ENCODE measurements at regions of chrX and their contacts with region 1.

Region 1: GRCh38 chrX:129606918-129607317 is 47.8 kb downstream of the APLN start:
- DNase-seq: peak; percentile 74
- H3K4me3 ChIP-seq: no peak overlapping the region
- H3K27ac ChIP-seq: no peak overlapping the region
- H3K4me1 ChIP-seq: peaks cover 0 to 11% (median 2%) of the 10 kb centered on the region in 4 donors
- H3K27me3 ChIP-seq: no peaks in the 10 kb centered on the region
- CTCF ChIP-seq: peak; percentile 66 to 90 (median 75)
- EP300 ChIP-seq: no peak
- POLR2A ChIP-seq: no peak

Region 2: DNA sequence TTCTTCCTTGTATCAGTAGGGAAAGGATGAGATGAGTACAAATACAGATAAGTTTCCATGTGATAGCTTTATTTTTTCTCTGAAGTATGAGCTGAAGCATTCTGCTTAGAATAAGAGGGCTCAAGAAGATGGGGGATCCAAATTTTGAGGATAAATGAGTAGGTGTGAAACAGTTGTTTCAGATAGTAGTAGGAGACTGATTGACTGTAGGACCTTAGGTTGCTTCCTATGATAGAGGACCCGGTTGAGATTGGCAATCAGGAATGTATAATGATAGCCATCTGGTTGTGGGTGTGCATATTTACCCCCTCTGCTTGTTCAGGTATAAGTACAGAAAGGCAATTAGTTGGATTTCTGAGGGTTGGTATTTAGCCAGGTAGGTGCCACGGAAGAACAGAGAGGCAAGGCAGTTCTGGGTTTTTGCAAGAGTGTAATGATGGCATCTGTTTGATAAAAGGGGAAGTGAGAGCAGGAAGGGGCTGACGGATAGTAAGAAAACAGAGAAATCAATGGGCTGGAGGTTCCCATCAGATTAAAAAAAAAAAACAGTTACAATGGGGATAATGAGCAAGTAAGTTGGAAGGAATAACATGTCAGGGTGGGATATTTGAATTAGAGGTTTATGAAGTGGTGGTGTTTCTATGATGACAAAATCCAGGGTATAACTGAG is 53.2 kb before region 1 on chrX:
- in situ Hi-C with region 1: no loop called
- intact Hi-C with region 1: no loop called
- DNase-seq: no peak
- H3K4me3 ChIP-seq: no peak overlapping the region
- H3K27ac ChIP-seq: no peak overlapping the region
- H3K4me1 ChIP-seq: no peaks in the 10 kb centered on the region
- H3K27me3 ChIP-seq: no peaks in the 10 kb centered on the region
- CTCF ChIP-seq: no peak
- EP300 ChIP-seq: no peak
- POLR2A ChIP-seq: no peak

Region 3: DNA sequence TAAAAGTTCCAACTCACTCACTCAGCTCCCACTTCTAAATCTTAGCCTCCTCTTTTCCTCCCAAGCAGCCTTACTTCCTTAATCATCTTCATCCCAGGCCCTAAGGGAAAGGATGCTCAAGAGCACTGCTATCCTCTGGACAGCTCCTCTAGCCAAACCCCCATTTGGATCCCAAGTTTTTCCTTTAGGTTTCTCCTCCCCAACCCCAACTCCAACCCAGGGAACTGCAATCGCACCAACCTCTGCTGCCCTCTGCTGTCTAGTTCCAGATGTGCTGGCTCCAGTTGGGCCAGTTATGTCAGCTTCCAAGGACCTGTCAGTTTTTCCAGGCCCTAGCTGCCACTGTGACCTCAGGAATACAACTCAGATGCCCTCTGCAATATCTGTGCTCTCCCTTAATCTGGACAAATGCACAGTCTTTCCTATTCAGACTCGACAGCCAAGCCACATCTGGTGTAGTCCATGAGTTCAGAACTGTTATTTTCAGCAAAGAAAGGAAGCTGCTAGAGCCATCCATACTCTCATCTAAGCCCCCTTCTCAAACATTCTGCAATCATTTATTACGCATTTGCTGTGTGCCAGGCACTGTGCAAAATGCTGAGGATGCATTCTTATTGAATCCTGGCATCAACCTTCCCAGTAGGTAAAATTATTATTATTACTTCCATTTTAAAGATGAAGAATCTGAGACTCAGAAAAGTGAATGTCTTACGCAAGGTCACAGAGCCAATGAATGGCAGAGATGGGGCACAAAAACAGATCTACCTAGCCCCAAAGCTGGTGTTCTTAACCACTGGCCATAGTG is 119.6 kb after region 1 on chrX:
- in situ Hi-C with region 1: loop called in 1 of 4 experiments (anchors 10 kb)
- intact Hi-C with region 1: no loop called
- DNase-seq: peak; percentile 62
- H3K4me3 ChIP-seq: no peak overlapping the region
- H3K27ac ChIP-seq: no peak overlapping the region
- H3K4me1 ChIP-seq: no peaks in the 10 kb centered on the region
- H3K27me3 ChIP-seq: no peaks in the 10 kb centered on the region
- CTCF ChIP-seq: peak; percentile 56 to 74 (median 59)
- EP300 ChIP-seq: no peak
- POLR2A ChIP-seq: no peak

Region 4: DNA sequence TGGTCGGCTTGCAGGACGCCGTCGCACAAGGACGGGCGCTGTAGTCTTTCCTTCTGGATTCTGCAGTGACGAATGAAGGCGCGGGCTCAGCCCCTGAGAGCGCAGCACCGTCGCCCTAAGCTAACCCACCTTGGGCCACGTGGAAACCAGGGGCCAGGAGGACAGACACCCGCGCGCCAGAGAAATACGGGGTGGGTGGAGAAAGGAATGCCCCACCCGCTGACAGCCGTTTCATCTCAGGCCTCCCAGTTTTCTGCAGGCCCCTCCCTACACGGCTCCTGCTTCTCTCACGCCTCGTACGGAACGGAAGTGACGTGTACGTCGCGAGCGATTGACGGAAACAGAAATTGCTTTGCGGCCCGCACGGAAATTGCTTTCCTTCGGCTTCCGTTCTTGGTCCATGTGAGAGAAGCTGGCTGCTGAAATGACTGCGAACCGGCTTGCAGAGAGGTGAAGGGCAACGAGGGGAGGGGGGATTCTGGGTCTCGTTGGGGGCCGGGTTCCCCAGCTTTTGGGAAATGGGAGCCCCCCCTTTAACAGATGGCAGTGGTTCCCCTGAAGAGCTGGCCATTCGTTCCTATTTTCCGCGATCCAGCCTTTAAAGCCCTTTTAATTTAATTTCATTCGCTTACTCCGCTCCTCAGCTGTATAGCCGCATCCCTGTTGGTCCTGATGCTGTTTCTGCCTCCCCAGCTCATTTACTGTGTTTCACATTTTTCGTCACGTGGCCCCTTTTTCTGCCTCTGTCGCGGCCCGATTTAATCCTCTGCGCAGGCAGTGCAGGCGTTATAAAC is 299.1 kb after region 1 on chrX and contains the start of gene UTP14A:
- in situ Hi-C with region 1: loop called in 1 of 4 experiments (anchors 25 kb)
- intact Hi-C with region 1: no loop called
- DNase-seq: peak; percentile 90
- H3K4me3 ChIP-seq: peak within 1 kb of the TSS; percentile 47 to 75 (median 62)
- H3K27ac ChIP-seq: peak within 1 kb of the TSS; percentile 73 to 88 (median 80)
- H3K4me1 ChIP-seq: peaks cover 0 to 8% (median 3%) of the 10 kb centered on the region in 4 donors
- H3K27me3 ChIP-seq: no peaks in the 10 kb centered on the region
- CTCF ChIP-seq: no peak
- EP300 ChIP-seq: no peak
- POLR2A ChIP-seq: peak; percentile 36
- total RNA-seq, gene UTP14A: 7.2 to 14.7 (median 11.4) TPM

Region 5: DNA sequence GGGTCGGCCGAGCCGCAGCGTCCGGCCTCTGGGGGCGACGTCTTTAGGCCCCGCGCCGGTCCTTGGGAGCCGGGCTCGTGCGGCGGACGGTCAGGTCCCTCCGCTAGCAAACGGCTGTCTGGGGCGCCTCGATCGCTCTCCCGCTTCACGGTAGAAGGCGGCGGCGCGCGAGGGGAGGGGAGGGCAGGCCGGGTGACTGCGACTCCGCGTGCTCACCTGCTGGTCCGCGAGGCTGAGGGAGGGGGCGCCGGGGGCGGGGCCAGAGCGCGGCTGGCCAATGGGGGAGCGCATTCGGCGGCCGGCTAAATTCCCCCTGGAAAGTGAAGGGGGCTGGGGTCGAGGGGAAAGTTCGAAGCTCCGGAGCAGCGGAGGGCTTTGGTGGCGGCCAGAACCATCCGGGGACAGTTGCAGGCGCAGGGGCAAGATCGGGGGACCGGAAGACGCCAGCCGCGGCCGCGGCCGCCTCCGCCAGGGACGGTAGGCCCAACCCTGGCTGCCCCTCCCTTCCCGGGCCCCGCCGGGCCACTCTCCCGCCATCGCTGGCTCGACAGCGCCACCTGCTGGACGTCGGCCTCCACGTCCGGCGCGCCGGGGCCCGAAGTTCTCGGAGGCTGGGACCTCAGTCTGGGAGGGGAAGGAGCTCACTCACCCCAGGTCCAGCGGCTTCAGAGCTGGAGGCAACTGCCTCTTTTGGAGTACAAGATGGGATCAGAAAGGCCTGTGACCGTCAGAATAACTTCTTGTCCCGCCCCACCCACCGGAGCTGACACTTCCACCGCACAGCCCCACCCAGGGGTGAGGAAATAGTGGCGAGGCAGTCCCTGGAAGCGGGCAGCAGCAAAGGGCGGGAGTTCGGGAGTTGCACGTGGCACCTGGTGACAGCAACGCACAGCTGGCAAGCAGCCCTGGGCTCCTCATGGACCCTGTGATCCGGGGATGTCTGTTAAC is 453.5 kb after region 1 on chrX:
- in situ Hi-C with region 1: loop called in 2 of 4 experiments (anchors 25 kb)
- intact Hi-C with region 1: no loop called
- DNase-seq: peak; percentile 86
- H3K4me3 ChIP-seq: peak overlapping the region; percentile 30 to 68 (median 42)
- H3K27ac ChIP-seq: peak overlapping the region; percentile 62 to 86 (median 82)
- H3K4me1 ChIP-seq: peaks cover 0 to 11% (median 4%) of the 10 kb centered on the region in 4 donors
- H3K27me3 ChIP-seq: no peaks in the 10 kb centered on the region
- CTCF ChIP-seq: peak; percentile 77 to 95 (median 86)
- EP300 ChIP-seq: no peak
- POLR2A ChIP-seq: peak; percentile 21

Region 6: GRCh38 chrX:130176354-130176776 is 569.4 kb after region 1 on chrX:
- in situ Hi-C with region 1: loop called in 1 of 4 experiments (anchors 25 kb)
- intact Hi-C with region 1: no loop called
- DNase-seq: peak; percentile 39
- H3K4me3 ChIP-seq: no peak overlapping the region
- H3K27ac ChIP-seq: no peak overlapping the region
- H3K4me1 ChIP-seq: peaks cover 0 to 5% (median 2%) of the 10 kb centered on the region in 4 donors
- H3K27me3 ChIP-seq: peaks cover 8% of the 10 kb centered on the region
- CTCF ChIP-seq: no peak
- EP300 ChIP-seq: no peak
- POLR2A ChIP-seq: no peak

Region 7: GRCh38 chrX:130902783-130903613 is 1296.1 kb after region 1 on chrX and contains the start of gene ENOX2:
- in situ Hi-C with region 1: loop called in 1 of 4 experiments (anchors 25 kb)
- intact Hi-C with region 1: no loop called
- DNase-seq: peak; percentile 91
- H3K4me3 ChIP-seq: peak within 1 kb of the TSS; percentile 45 to 90 (median 82)
- H3K27ac ChIP-seq: peak within 1 kb of the TSS; percentile 74 to 88 (median 84)
- H3K4me1 ChIP-seq: peaks cover 0 to 7% (median 3%) of the 10 kb centered on the region in 4 donors
- H3K27me3 ChIP-seq: no peaks in the 10 kb centered on the region
- CTCF ChIP-seq: peak in 2 of 5 experiments; percentile 27 to 36
- EP300 ChIP-seq: no peak
- POLR2A ChIP-seq: peak; percentile 78
- total RNA-seq, gene ENOX2: 1.5 to 10.4 (median 4.6) TPM

Measured in transverse colon (tissue), 4 donors.